Common myeloid progenitor, CD34-positive (primary cell): ENCODE measurements at regions of chr21 and their contacts with region 1.

Region 1: DNA sequence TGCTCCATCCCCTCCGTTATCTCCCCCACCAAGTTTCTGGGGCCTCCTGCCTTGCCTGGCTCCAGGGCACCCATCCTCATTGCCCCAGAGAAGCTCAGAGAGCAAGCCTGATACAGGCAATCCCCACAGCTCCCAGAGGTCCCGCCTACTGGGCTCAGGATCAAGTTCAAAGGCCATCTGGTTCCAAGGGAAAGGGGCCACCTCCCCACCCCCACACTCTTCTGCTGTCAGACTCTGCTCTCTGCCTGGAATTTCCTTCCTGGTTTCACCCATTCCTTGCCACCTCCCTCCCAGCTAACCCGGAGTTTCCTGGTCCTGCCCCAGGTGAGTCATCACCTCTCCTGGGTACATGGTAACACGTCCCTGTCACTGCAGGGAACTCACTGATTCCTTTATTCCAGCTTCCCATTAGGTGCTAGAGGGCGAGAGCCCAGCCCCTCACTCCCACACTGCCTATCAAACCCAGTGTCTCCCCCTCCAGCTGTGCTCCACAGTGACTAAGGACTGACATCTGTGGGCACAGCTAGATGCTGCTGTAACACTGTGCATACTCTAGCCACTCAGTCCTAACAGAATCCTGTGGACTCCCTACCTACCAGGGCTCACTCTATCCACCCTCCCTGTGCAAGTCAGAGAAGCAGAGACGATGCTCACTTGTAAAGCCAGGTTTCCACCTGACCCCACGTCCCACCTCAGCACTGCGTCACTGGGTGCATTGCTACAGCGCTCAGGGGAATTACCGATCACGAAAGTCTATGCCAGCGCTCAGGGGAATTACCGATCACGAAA is 21.8 kb downstream of the RSPH1 start:
- DNase-seq: peak in 2 of 3 donors; percentile 44
- H3K4me3 ChIP-seq: no peak overlapping the region
- H3K27ac ChIP-seq: no peak overlapping the region
- H3K4me1 ChIP-seq: peaks cover 0 to 19% (median 14%) of the 10 kb centered on the region in 4 experiments
- H3K27me3 ChIP-seq: no peaks in the 10 kb centered on the region

Region 2: GRCh38 chr21:42392721-42393442 is 81.4 kb before region 1 on chr21:
- CTCF ChIA-PET with region 1: no interaction called
- POLR2A ChIA-PET with region 1: no interaction called
- DNase-seq: peak in 2 of 3 donors; percentile 40 to 69
- H3K4me3 ChIP-seq: no peak overlapping the region
- H3K27ac ChIP-seq: no peak overlapping the region
- H3K4me1 ChIP-seq: peaks cover 11 to 27% (median 22%) of the 10 kb centered on the region in 4 experiments
- H3K27me3 ChIP-seq: no peaks in the 10 kb centered on the region

Region 3: GRCh38 chr21:42486531-42486930 is 12.3 kb after region 1 on chr21:
- CTCF ChIA-PET with region 1: interaction called, 12 read pairs
- POLR2A ChIA-PET with region 1: no interaction called
- DNase-seq: peak; percentile 63 to 98 (median 96)
- H3K4me3 ChIP-seq: no peak overlapping the region
- H3K27ac ChIP-seq: peak overlapping the region; percentile 1 to 56
- H3K4me1 ChIP-seq: peaks cover 14 to 67% (median 35%) of the 10 kb centered on the region in 4 experiments
- H3K27me3 ChIP-seq: no peaks in the 10 kb centered on the region